ENCODE measurements at regions of chr6 and their contacts with region 1.

Region 1: GRCh38 chr6:105077596-105078385 is 102.0 kb downstream of the POPDC3 start:
- DNase-seq: no peak
- H3K4me3 Mint-ChIP-seq: no peak overlapping the region
- H3K27ac Mint-ChIP-seq: no peak overlapping the region
- H3K4me1 Mint-ChIP-seq: no peaks in the 10 kb centered on the region
- H3K27me3 Mint-ChIP-seq: no peaks in the 10 kb centered on the region
- CTCF ChIP-seq: peak; percentile 19

Region 2: GRCh38 chr6:104789770-104790190 is 288.0 kb before region 1 on chr6:
- CTCF ChIA-PET with region 1: interaction called, 21 read pairs
- intact Hi-C with region 1: loop called (anchors 1 kb)
- DNase-seq: no peak
- H3K4me3 Mint-ChIP-seq: no peak overlapping the region
- H3K27ac Mint-ChIP-seq: no peak overlapping the region
- H3K4me1 Mint-ChIP-seq: peaks cover 8% of the 10 kb centered on the region
- H3K27me3 Mint-ChIP-seq: no peaks in the 10 kb centered on the region
- CTCF ChIP-seq: peak; percentile 15

Region 3: GRCh38 chr6:104859225-104860146 is 218.3 kb before region 1 on chr6 and contains the start of gene HACE1:
- CTCF ChIA-PET with region 1: no interaction called
- intact Hi-C with region 1: loop called (anchors 1 kb)
- DNase-seq: peak; percentile 88
- H3K4me3 Mint-ChIP-seq: peak within 1 kb of the TSS; percentile 92
- H3K27ac Mint-ChIP-seq: no peak within 1 kb of the TSS
- H3K4me1 Mint-ChIP-seq: peaks cover 9% of the 10 kb centered on the region
- H3K27me3 Mint-ChIP-seq: no peaks in the 10 kb centered on the region
- CTCF ChIP-seq: no peak
- total RNA-seq, gene HACE1: 7.9 and 12.5 TPM in 2 replicates

Region 4: GRCh38 chr6:104896914-104897313 is 180.9 kb before region 1 on chr6:
- CTCF ChIA-PET with region 1: no interaction called
- intact Hi-C with region 1: loop called (anchors 2 kb)
- DNase-seq: no peak
- H3K4me3 Mint-ChIP-seq: no peak overlapping the region
- H3K27ac Mint-ChIP-seq: no peak overlapping the region
- H3K4me1 Mint-ChIP-seq: no peaks in the 10 kb centered on the region
- H3K27me3 Mint-ChIP-seq: peaks cover 18% of the 10 kb centered on the region
- CTCF ChIP-seq: no peak

Region 5: DNA sequence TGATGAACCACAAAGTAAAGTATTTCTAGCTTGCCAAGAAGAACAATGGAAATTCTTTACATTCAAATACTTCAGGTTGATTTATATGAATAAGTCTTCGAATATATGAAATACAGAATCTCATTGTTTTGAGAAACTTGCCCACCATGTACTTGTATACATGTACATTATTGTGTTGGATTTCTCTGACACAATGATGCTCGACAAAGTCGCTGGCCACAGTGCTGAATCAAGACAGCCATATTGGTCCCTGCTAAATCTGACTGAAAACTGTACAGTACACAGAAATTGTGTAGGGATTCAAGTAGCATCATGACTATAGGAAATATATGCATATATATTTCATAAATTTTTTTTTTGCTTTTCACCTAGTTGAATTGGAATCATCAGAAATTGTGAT is 134.0 kb before region 1 on chr6:
- CTCF ChIA-PET with region 1: no interaction called
- intact Hi-C with region 1: loop called (anchors 2 kb)
- DNase-seq: no peak
- H3K4me3 Mint-ChIP-seq: no peak overlapping the region
- H3K27ac Mint-ChIP-seq: no peak overlapping the region
- H3K4me1 Mint-ChIP-seq: no peaks in the 10 kb centered on the region
- H3K27me3 Mint-ChIP-seq: no peaks in the 10 kb centered on the region
- CTCF ChIP-seq: no peak

Region 6: GRCh38 chr6:104983281-104983680 is 94.5 kb before region 1 on chr6:
- CTCF ChIA-PET with region 1: no interaction called
- intact Hi-C with region 1: no loop called
- DNase-seq: no peak
- H3K4me3 Mint-ChIP-seq: no peak overlapping the region
- H3K27ac Mint-ChIP-seq: no peak overlapping the region
- H3K4me1 Mint-ChIP-seq: no peaks in the 10 kb centered on the region
- H3K27me3 Mint-ChIP-seq: no peaks in the 10 kb centered on the region
- CTCF ChIP-seq: no peak

Region 7: DNA sequence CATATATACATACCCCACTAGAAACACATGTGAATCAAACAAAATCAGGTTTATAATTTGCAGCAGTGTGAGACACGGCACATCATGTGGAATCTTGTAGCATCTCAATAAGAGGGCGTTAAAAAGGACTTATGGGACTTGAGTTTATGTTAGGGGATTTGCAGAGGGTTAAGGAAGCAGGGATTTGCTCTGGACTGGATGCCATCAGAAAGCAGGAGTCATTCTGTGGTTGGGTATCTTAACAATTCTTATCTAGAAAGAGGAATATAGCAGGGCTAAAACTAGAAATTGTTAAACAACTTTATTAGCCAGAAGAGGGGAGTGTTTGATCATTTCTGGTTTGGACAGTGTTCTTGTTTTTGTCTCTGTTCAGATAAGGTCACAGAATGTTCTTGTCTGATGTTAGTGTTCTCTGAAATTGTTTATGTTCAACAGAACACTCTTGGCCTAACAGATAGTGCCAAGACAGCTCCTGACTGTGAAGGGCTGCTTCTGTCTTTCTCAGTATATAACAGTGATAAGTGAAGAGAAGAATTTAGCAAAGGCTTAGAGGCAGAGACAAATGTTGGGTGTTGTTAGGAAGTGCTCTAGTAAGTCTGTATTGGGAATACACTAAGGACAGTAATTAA is 81.7 kb before region 1 on chr6:
- CTCF ChIA-PET with region 1: no interaction called
- intact Hi-C with region 1: loop called (anchors 1 kb)
- DNase-seq: no peak
- H3K4me3 Mint-ChIP-seq: no peak overlapping the region
- H3K27ac Mint-ChIP-seq: no peak overlapping the region
- H3K4me1 Mint-ChIP-seq: no peaks in the 10 kb centered on the region
- H3K27me3 Mint-ChIP-seq: no peaks in the 10 kb centered on the region
- CTCF ChIP-seq: no peak

Region 8: GRCh38 chr6:105015482-105015881 is 62.3 kb before region 1 on chr6:
- CTCF ChIA-PET with region 1: no interaction called
- intact Hi-C with region 1: loop called (anchors 2 kb)
- DNase-seq: no peak
- H3K4me3 Mint-ChIP-seq: no peak overlapping the region
- H3K27ac Mint-ChIP-seq: no peak overlapping the region
- H3K4me1 Mint-ChIP-seq: no peaks in the 10 kb centered on the region
- H3K27me3 Mint-ChIP-seq: no peaks in the 10 kb centered on the region
- CTCF ChIP-seq: no peak

Region 9: DNA sequence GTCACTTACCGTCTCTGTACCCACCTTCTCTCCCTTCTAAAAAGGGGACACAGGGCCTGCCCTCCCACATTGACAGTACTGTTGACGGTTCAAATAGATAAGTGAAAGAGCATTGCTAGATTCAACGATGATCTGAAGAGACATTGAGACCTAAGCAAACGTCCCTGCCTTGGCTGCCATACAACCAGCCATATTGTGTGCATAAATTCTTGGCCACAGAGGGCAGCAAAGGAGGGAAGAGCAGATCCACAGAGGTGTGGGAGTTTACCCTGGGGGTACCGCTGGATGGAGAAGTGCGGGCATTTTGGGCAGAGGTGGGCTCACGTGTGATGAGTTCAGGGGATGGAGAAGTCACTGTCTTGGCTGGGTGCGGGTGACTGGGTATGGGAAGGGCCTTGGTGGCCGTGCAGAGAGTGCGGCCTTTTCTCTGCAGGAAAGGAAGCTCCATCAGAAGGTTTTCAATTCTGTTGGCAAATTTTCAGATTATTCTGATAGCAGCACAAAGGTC is 16.4 kb after region 1 on chr6:
- CTCF ChIA-PET with region 1: no interaction called
- intact Hi-C with region 1: no loop called
- DNase-seq: no peak
- H3K4me3 Mint-ChIP-seq: no peak overlapping the region
- H3K27ac Mint-ChIP-seq: no peak overlapping the region
- H3K4me1 Mint-ChIP-seq: peaks cover 11% of the 10 kb centered on the region
- H3K27me3 Mint-ChIP-seq: no peaks in the 10 kb centered on the region
- CTCF ChIP-seq: no peak